ENCODE measurements at regions of chr21 and their contacts with region 1.

Region 1: DNA sequence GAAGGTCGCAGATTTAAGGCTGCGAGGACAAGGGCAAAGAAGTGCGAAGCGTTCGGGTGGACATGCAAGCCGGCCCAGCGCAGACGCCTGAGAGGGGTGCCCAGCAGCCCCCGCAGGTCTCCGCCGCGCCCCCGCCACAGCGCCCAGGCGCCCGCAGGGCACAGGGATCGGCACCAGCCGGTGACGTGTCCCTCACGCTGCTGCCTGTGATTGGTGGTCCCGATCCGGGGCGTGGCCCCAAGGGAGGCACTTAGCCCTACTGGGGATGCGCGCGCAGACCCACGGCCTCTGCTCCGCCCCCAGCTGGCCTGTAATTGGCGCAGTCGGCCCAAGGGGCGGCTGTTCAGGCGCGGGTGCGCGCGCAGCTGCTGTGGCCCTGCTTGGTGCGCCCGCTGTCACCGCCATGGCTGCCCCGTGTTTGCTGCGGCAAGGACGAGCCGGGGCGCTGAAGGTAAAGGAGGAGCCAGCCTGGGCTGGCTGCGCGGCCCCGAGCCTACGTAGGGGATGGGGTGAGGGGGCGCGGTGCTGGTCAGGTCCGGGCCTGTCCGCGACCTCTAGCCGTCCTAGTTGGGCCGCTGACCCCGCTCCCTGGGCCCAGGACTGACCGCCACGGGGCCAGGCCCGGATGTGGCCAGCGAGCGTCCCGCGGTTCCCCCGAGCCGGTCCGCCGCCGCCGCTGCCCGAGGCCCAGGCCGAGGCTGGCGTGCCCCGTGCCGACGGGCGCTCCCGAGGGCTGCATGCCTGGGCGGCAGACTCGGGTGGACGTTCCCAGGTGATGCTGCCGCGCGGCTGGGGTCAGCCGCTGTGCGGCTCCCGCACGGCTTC is at the start of gene NDUFV3:
- DNase-seq: peak; percentile 100
- ATAC-seq: peak; percentile 97
- H3K4me3 Mint-ChIP-seq: peak within 1 kb of the TSS; percentile 74
- H3K27ac Mint-ChIP-seq: peak within 1 kb of the TSS; percentile 90
- H3K4me1 Mint-ChIP-seq: peaks cover 13% of the 10 kb centered on the region
- H3K27me3 Mint-ChIP-seq: no peaks in the 10 kb centered on the region
- total RNA-seq, gene NDUFV3: 24.6 to 31.8 TPM

Region 2: GRCh38 chr21:42560517-42561179 is 332.5 kb before region 1 on chr21:
- CTCF ChIA-PET with region 1: no interaction called
- POLR2A ChIA-PET with region 1: interaction called, 11 read pairs
- intact Hi-C with region 1: no loop called
- DNase-seq: no peak
- ATAC-seq: no peak
- H3K4me3 Mint-ChIP-seq: no peak overlapping the region
- H3K27ac Mint-ChIP-seq: no peak overlapping the region
- H3K4me1 Mint-ChIP-seq: no peaks in the 10 kb centered on the region
- H3K27me3 Mint-ChIP-seq: no peaks in the 10 kb centered on the region

Region 3: DNA sequence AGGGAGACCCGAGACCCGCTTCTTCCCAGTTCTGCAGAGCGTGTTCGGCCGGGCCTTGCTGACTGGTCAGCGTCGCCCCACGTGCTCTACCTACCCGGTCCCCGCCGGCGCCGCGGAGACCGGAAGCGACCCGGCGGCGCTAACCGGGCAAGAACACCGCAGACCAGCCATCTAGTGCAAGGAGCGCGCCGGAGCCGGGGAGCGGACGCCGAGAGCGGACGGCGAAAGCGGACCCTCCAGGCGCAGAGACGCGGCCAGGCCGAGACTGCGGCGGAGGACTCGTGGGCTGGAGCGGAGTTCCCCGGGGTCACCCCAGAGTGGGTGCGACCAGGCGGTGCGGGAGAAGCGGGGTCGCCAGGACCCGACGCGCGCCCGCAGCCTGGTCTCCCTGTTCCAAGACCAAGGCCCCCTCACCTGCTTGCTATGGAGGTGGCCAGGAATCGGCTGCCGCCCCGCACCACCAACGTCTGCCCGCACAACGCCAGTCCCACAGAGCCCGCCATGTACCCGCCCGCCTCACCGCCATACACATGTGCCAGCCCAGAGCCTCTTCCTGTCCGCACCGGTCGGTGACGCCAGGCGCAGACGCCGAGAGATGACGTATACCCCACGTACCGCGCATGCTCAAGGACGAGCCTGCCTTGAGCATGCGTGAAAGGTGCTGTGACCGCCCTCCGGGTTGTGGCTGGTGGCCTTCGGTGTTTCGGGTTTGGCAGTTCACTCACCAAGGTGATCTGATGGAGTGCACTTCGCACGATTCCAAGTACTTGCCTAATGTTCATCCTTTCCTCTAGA is 14.0 kb before region 1 on chr21 and contains the start of gene WDR4:
- CTCF ChIA-PET with region 1: interaction called, 5 read pairs
- POLR2A ChIA-PET with region 1: interaction called, 8 read pairs
- intact Hi-C with region 1: loop called (anchors 1 kb)
- DNase-seq: peak; percentile 99
- ATAC-seq: peak; percentile 93
- H3K4me3 Mint-ChIP-seq: peak within 1 kb of the TSS; percentile 92
- H3K27ac Mint-ChIP-seq: peak within 1 kb of the TSS; percentile 99
- H3K4me1 Mint-ChIP-seq: peaks cover 17% of the 10 kb centered on the region
- H3K27me3 Mint-ChIP-seq: no peaks in the 10 kb centered on the region
- total RNA-seq, gene WDR4: 34.0 to 46.5 TPM

Region 4: GRCh38 chr21:42923541-42924432 is 30.6 kb after region 1 on chr21:
- CTCF ChIA-PET with region 1: no interaction called
- POLR2A ChIA-PET with region 1: no interaction called
- intact Hi-C with region 1: loop called in 1 of 2 experiments (anchors 1 kb)
- DNase-seq: peak; percentile 87
- ATAC-seq: peak; percentile 99
- H3K4me3 Mint-ChIP-seq: peak overlapping the region; percentile 52
- H3K27ac Mint-ChIP-seq: peak overlapping the region; percentile 79
- H3K4me1 Mint-ChIP-seq: peaks cover 24% of the 10 kb centered on the region
- H3K27me3 Mint-ChIP-seq: no peaks in the 10 kb centered on the region